ENCODE measurements at regions of chr3 and their contacts with region 1.

Region 1: GRCh38 chr3:188421836-188422540 is 268.0 kb downstream of the LPP start:
- DNase-seq: peak in 1 of 2 donors; percentile 15
- ATAC-seq: peak in 7 of 8 donors; percentile 59 to 80 (median 66)
- H3K4me3 ChIP-seq: no peak overlapping the region
- H3K27ac ChIP-seq: peak overlapping the region in 5 of 10 donors; percentile 3 to 73 (median 20)
- H3K4me1 ChIP-seq: peaks cover 0 to 31% (median 17%) of the 10 kb centered on the region in 9 donors
- H3K27me3 ChIP-seq: no peaks in the 10 kb centered on the region
- CTCF ChIP-seq: no peak

Region 2: DNA sequence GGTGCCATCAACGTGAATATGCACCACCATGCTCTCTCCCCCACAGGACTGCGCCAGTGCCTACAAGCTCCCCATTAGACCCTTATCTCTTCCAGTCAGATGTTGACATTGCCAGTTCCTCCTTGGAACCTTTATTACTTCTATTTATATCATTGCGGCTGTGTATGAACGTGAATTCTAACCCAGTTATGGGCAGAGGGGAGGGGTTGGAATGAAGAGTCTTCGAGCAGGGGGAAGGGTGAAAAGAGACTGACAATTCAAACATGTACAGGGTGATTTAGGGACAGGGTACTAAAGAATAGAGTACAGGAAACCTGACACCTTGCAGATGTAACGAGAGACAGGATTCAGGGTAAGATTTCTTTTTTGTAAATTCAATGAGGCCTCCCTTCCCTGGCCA is 1533.4 kb before region 1 on chr3:
- intact Hi-C with region 1: loop called in 1 of 10 experiments (anchors 5 kb)
- DNase-seq: peak in 1 of 2 donors; percentile 33
- ATAC-seq: peak; percentile 79 to 98 (median 92)
- H3K4me3 ChIP-seq: no peak overlapping the region
- H3K27ac ChIP-seq: peak overlapping the region in 6 of 10 donors; percentile 17 to 49 (median 42)
- H3K4me1 ChIP-seq: peaks cover 0 to 17% (median 0%) of the 10 kb centered on the region in 9 donors
- H3K27me3 ChIP-seq: no peaks in the 10 kb centered on the region
- CTCF ChIP-seq: no peak

Region 3: DNA sequence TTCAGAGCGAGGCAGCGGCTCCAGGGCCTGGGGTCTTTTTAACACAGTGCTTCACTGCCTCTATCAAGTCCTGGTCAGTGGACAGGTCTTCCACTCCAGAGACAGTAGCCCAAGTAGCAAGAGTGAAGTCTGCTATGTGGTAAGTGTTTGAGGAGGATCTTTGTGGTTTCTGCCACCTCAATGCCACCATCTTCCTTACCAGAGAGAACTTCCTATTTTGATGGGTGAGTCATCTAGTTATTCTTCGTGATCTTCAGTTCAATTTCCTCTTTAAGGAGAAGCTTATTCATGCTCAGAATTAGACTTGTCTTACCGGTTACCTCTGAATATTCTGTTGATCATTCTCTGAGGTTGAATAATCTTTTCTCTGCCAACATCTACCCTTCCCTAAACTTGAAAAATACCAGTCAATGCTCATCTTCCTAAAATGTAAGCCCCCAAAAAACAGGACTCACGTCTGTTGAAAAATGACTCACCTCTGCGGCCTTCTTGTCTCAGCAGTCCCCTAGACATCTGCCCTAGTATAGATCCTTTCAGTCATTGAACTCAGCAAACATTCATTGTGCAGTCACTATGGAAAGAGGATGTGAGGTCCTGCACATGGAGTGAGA is 644.6 kb before region 1 on chr3:
- intact Hi-C with region 1: no loop called
- DNase-seq: no peak
- ATAC-seq: peak in 5 of 8 donors; percentile 45 to 75 (median 57)
- H3K4me3 ChIP-seq: no peak overlapping the region
- H3K27ac ChIP-seq: peak overlapping the region in 2 of 10 donors; percentile 14 to 88
- H3K4me1 ChIP-seq: peaks cover 0 to 67% (median 10%) of the 10 kb centered on the region in 9 donors
- H3K27me3 ChIP-seq: no peaks in the 10 kb centered on the region
- CTCF ChIP-seq: no peak

Measured in heart right ventricle (tissue), 16 donors.